Activated CD8-positive, alpha-beta memory T cell treated with anti-CD3 and anti-CD28 coated beads, Interleukin-2, amount 10 ng/mL, durations not matched to agents 7 days and 5 days (primary cell): ENCODE measurements at regions of chr15 and their contacts with region 1.

Region 1: GRCh38 chr15:100918034-100918689 is 995 bp upstream of the LRRK1 start:
- DNase-seq: peak; percentile 78
- ATAC-seq: peak; percentile 94
- H3K4me3 Mint-ChIP-seq: peak overlapping the region; percentile 64
- H3K27ac Mint-ChIP-seq: no peak overlapping the region
- H3K4me1 Mint-ChIP-seq: peaks cover 26% of the 10 kb centered on the region
- H3K27me3 Mint-ChIP-seq: peaks cover 83% of the 10 kb centered on the region

Region 2: DNA sequence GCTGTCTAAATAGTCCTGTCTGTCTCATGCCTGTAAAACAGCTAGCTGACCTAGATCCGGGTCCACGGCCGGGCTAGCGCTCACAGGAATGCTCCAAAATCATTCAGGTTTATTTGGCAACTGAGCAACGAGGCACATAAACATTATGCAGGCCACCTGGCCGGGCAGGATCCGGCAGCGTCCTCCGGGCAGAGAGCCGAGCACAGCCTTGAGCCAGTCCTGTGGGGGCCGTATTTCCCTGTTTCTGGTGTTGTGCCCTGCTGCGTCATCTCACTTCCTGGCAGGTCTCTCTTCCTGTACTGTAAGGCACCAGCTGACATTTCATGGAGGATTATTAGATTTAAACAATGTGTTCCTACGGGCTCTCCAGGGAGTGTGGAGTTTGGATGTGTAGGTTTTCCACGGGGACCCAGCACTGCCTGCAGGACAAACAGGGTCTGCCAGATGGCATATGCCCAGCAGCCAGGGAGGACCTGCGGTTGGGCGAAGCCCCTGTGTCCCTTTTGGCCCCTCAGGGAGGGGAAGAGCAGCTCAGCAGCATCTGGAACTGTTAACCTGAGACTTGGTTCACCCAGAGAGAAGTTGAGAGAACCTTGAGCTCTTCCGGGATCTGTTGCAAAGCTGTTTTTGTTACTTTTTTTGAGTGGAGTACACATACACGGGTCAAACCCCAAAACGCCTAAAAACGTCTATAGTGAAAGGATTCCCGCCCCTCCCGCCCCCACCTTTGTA is 15.6 kb before region 1 on chr15:
- CTCF ChIA-PET with region 1: interaction called, 12 read pairs
- DNase-seq: no peak
- ATAC-seq: no peak
- H3K4me3 Mint-ChIP-seq: no peak overlapping the region
- H3K27ac Mint-ChIP-seq: no peak overlapping the region
- H3K4me1 Mint-ChIP-seq: no peaks in the 10 kb centered on the region
- H3K27me3 Mint-ChIP-seq: peaks cover 20% of the 10 kb centered on the region

Region 3: DNA sequence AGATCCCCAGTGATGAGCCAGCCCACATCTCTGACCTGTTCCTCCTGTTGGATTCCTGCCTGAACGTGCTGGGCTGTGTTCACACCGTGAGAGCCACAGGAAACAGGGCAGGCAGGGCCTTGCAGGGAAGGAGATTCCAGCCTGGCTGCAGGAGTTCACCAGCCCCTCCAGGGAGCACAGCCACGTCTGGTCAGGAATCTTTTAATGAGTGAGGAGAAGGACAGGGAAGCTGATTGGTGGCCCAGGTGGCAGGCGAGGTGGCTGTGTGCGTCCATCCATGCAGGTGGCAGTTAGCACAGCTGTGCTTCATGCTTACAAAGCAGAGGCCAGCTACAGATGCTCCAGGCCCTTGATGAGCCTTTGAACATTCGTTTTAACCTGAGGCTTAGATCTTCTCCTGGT is 11.5 kb after region 1 on chr15:
- CTCF ChIA-PET with region 1: interaction called, 13 read pairs
- DNase-seq: no peak
- ATAC-seq: no peak
- H3K4me3 Mint-ChIP-seq: no peak overlapping the region
- H3K27ac Mint-ChIP-seq: no peak overlapping the region
- H3K4me1 Mint-ChIP-seq: no peaks in the 10 kb centered on the region
- H3K27me3 Mint-ChIP-seq: peaks cover 7% of the 10 kb centered on the region